ENCODE measurements at regions of chr3 and their contacts with region 1.

Region 1: DNA sequence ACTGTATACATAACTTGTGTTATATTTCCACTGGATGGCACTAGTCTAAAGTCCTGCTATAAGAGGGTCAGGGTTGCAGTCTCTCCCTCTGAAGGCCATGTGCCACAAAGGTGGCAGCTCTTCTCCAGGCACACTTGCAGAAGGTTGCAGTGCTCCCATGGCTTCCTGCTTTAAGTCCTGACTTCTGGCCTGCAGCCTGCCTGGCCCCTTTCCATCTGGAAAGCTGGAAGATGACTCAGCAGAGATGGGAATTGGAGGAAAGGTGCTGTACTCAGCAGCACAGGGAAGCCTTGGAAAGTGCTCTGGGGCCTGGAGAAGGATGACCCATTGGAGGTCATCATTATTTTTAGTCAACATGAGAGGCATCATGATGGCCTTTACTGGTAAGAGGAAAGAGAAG is 40.9 kb upstream of the MRPL3 start:
- DNase-seq: no peak
- CTCF ChIP-seq: no peak

Region 2: GRCh38 chr3:132034486-132035464 is 491.1 kb after region 1 on chr3 and contains the start of gene CPNE4:
- in situ Hi-C with region 1: loop called (anchors 10 kb)
- DNase-seq: peak; percentile 89
- CTCF ChIP-seq: peak; percentile 73

Measured in GM13976 (cell line).